WTC11 (cell line): ENCODE measurements at regions of chr17 and their contacts with region 1.

Region 1: DNA sequence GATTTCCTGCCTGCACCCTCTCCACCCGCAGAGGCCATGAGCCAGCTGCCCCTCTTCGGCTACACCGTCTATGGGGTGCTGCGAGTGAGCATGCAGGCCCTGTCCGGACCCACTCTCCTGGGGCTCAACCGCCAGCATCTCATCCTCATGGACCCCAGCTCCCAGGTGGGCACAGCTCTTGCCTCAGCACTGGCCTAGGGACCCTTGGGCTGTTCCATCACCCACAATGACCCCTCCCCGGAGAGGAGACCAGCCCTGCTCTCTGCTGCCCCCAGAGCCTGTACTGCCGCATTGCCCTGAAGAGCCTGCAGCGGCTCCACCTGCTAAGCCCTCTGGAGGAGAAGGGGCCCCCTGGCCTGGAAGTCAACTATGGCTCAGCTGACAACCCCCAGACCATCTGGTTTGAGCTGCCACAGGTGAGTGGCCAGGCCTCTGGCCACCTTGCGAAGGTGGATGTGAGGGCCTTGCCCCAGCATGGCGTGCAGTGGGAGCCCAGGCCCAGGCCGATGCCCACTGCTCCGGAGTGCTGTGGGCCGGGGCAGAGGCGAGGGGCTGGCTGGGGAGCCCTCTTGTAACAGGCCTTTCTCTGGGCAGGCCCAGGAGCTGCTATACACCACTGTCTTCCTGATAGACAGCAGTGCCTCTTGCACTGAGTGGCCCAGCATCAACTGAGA is 7.3 kb upstream of the SMIM5 start:
- DNase-seq: peak; percentile 87
- ATAC-seq: peak; percentile 93
- H3K4me3 Mint-ChIP-seq: no peak overlapping the region
- H3K27ac Mint-ChIP-seq: no peak overlapping the region
- H3K4me1 Mint-ChIP-seq: no peaks in the 10 kb centered on the region
- H3K27me3 Mint-ChIP-seq: no peaks in the 10 kb centered on the region
- CTCF ChIP-seq: peak; percentile 90

Region 2: GRCh38 chr17:75614006-75614405 is 11.9 kb before region 1 on chr17:
- CTCF ChIA-PET with region 1: interaction called, 54 read pairs
- POLR2A ChIA-PET with region 1: no interaction called
- DNase-seq: peak; percentile 65
- ATAC-seq: peak; percentile 77
- H3K4me3 Mint-ChIP-seq: no peak overlapping the region
- H3K27ac Mint-ChIP-seq: no peak overlapping the region
- H3K4me1 Mint-ChIP-seq: no peaks in the 10 kb centered on the region
- H3K27me3 Mint-ChIP-seq: no peaks in the 10 kb centered on the region
- CTCF ChIP-seq: no peak

Region 3: GRCh38 chr17:75645889-75646637 is 20.1 kb after region 1 on chr17:
- CTCF ChIA-PET with region 1: interaction called, 456 read pairs
- POLR2A ChIA-PET with region 1: no interaction called
- DNase-seq: no peak
- ATAC-seq: no peak
- H3K4me3 Mint-ChIP-seq: no peak overlapping the region
- H3K27ac Mint-ChIP-seq: peak overlapping the region; percentile 57
- H3K4me1 Mint-ChIP-seq: peaks cover 18% of the 10 kb centered on the region
- H3K27me3 Mint-ChIP-seq: no peaks in the 10 kb centered on the region
- CTCF ChIP-seq: no peak

Region 4: GRCh38 chr17:75652915-75653549 is 27.1 kb after region 1 on chr17:
- CTCF ChIA-PET with region 1: interaction called, 456 read pairs
- POLR2A ChIA-PET with region 1: interaction called, 3 read pairs
- DNase-seq: peak; percentile 76
- ATAC-seq: peak; percentile 99
- H3K4me3 Mint-ChIP-seq: no peak overlapping the region
- H3K27ac Mint-ChIP-seq: peak overlapping the region; percentile 71; the same call in 1 of the 2 replicates
- H3K4me1 Mint-ChIP-seq: no peaks in the 10 kb centered on the region
- H3K27me3 Mint-ChIP-seq: no peaks in the 10 kb centered on the region
- CTCF ChIP-seq: peak; percentile 66; the same call in 1 of the 2 replicates